WTC11 (cell line): ENCODE measurements at regions of chr12 and their contacts with region 1.

Region 1: DNA sequence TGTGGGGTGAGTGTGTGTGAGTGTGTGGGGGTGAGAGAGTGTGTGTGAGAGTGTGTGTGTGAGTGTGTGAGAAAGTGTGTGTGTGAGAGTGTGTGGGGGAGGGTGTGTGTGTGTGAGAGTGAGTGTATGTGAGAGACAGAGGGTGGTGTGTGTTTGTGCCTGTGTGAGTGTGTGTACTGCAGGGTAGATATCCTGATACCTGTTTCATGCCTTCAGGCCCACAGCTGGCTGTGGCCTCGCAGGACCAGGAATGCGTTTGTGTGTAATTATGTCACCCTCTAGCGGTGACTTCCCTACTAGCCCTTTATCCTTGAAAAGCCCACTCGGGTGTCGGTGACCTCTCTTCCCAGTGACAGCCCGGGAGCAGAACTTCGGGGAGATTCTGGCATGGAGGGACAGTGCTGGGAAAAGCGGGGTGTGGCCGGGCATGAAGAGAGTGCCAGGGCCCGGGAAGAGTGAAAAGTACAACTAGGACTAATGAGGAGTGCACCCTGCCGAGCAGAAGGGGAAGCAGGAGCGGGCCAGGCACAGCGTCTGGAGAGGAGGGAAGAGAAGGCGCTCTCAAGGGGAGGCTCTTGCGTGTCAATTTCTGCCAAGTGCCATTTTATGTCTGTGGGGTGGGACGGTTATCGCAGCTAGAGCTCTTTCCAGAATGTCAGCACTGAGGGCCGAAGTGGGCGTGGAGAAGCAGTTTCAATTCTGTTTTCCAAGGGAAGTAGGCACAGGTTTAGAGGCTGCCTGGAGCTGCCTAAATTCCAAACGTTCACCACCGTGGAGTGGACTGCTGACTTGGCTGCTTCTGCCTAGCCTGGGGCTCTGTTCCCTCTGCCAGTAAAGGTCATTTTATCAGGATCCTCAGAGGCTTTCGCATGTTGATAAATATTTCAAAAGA is 11.0 kb upstream of the FBXL14 start:
- DNase-seq: peak; percentile 48
- ATAC-seq: peak; percentile 77
- H3K4me3 Mint-ChIP-seq: peak overlapping the region; percentile 75
- H3K27ac Mint-ChIP-seq: no peak overlapping the region
- H3K4me1 Mint-ChIP-seq: peaks cover 14% of the 10 kb centered on the region
- H3K27me3 Mint-ChIP-seq: peaks cover 38% of the 10 kb centered on the region
- CTCF ChIP-seq: peak; percentile 41; the same call in 1 of the 2 replicates

Region 2: DNA sequence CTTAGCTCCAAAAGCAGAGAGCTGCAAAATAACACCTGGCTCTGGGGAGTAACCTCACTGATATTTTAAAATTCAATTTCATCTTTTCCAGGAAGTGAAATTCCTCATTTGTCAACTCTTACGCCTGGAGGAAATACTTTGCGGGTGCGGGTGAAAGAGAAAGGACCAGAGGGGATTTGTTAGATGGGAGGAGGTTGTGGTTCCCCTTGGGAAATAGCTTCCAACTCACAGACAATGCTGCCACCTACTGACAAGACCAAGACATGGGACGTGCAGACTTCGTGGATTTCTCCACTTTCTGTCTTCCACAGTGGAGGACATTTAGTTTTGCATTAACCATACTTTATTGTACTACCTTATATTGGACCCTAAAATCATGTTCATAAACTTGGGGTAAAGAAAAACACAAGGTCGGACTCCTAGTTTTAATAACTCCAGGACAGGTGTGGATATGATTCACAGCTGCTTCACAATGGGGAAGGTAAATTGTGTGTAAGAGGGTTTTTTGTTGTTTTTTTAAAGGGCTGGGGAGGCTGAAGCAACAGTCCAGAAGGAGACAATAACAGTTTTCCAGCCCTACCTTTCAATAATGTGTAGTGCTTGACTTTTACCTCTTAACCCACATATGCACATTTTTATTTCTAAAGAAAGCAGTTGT is 21.8 kb before region 1 on chr12:
- CTCF ChIA-PET with region 1: interaction called, 12 read pairs
- POLR2A ChIA-PET with region 1: no interaction called
- DNase-seq: peak; percentile 70
- ATAC-seq: peak; percentile 65
- H3K4me3 Mint-ChIP-seq: no peak overlapping the region
- H3K27ac Mint-ChIP-seq: no peak overlapping the region
- H3K4me1 Mint-ChIP-seq: peaks cover 24% of the 10 kb centered on the region
- H3K27me3 Mint-ChIP-seq: peaks cover 56% of the 10 kb centered on the region
- CTCF ChIP-seq: peak; percentile 73

Region 3: DNA sequence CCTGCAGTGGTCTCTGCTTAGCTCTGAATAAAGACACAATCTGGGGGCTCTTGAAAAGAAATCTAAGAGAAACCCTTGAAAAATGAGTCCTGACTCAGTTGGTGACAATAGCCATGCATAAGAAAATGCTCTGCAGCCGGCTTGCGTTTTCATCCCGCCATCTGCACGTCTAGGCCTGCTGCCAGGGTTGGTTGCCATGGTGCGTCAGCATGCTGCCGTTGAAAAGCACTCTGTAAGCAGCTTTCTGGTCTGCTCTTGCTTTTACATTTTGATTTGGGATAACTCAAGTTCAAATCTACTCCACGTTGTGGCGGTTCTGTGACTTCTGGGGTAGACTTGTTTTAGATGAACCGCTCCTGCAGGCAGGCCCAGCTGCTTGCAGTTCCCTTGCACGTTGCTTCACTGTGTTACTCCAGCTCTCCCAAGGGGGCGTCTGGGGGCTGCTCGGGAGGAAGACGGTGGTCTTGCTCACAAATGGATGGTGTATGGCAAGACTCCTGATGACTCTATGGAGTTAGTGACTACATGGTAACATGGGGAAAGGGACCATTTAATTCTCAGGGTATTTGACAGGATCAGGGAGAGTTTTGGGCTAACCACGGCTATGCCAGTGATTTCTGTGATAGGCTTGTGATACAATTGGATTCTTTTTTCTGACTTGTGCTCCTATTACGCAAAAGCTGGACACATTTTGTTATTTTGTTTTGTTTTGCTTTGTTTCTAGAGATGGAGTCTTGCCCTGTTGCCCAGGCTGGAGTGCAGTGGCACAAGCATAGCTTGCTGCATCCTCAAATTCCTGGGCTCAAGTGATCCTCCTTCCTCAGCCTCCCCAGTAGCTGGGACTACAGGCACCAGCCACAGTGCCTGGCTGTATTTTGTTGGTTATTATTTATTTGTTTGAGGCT is 39.4 kb after region 1 on chr12:
- CTCF ChIA-PET with region 1: no interaction called
- POLR2A ChIA-PET with region 1: no interaction called
- DNase-seq: no peak
- ATAC-seq: peak; percentile 30; the same call in 1 of the 2 replicates
- H3K4me3 Mint-ChIP-seq: no peak overlapping the region
- H3K27ac Mint-ChIP-seq: no peak overlapping the region
- H3K4me1 Mint-ChIP-seq: 0 out of 2 replicates have a peak, but pooled peaks cover under 1% of the 10 kb centered on the region
- H3K27me3 Mint-ChIP-seq: no peaks in the 10 kb centered on the region
- CTCF ChIP-seq: no peak